ENCODE measurements at regions of chr2 and their contacts with region 1.

Region 1: DNA sequence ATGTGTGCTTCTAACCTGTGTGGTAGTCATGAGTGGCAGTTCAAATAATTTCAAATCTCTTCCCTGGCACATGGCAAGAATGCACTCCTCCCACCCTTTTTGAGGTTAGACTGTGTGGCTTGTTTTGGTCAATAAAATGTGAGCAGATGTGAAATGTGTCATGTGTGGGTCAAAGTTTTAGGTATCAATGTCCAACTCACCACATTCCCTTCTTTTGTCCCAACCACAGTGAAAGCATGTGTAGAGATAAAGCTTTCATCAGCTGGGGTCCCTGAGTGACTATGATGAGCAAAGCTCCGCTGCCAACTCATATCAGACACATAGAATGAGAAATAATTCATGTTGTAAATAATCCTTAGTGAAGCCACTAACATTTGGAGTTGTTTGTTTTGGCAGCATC is 118.2 kb downstream of the PAX3 start:
- DNase-seq: no peak
- ATAC-seq: no peak
- H3K4me3 ChIP-seq: no peak overlapping the region
- H3K27ac ChIP-seq: no peak overlapping the region
- H3K4me1 ChIP-seq: no peaks in the 10 kb centered on the region
- H3K27me3 ChIP-seq: peaks cover 0 to 21% (median 0%) of the 10 kb centered on the region in 9 donors
- CTCF ChIP-seq: no peak
- POLR2A ChIP-seq: no peak

Region 2: GRCh38 chr2:222160944-222161343 is 19.7 kb before region 1 on chr2:
- intact Hi-C with region 1: loop called in 1 of 10 experiments (anchors 2 kb)
- DNase-seq: no peak
- ATAC-seq: peak in 1 of 4 donors; percentile 53
- H3K4me3 ChIP-seq: no peak overlapping the region
- H3K27ac ChIP-seq: no peak overlapping the region
- H3K4me1 ChIP-seq: peaks cover 0 to 6% (median 0%) of the 10 kb centered on the region in 12 donors
- H3K27me3 ChIP-seq: peaks cover 0 to 22% (median 0%) of the 10 kb centered on the region in 9 donors
- CTCF ChIP-seq: no peak
- POLR2A ChIP-seq: no peak